ENCODE measurements at regions of chr19 and their contacts with region 1.

Region 1: DNA sequence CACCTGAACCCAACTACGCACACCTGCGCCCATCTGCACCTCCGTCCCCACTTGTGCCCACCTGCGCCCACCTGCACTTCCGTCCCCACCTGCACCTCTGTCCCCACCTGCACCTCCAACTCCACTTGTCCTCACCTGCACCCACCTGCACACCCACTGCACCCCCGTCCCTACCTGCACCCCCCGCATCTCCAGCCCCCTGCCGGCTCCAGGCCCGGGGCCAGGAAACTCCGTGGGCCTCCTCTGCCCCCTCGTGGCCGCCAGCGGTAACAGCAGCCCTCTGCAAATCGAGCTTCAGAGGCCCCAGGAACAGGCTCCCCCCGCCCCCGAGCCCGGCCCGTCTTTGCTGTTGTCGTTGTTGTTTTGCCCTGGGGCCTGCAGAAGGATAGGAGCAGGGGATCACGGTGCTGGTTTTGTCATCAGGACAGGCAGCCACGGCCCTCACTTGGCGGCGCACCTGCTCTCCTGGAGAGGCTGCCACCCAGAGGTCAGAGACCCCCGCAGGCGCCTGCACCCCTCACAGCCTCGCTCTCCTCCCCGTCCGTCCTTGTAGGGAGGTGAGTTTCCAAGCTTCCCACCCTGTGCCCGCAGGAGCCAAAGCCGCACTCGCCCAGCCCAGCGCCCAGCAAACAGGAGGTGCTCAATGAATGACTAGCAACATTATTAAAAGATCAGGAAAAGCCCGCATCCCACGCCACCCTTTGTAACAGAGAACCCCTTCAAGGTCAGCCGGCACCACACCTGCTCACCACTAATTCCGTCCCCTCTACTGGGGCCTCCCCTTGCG is 65.4 kb downstream of the GNG7 start:
- DNase-seq: peak; percentile 87
- ATAC-seq: peak; percentile 81
- H3K4me3 Mint-ChIP-seq: no peak overlapping the region
- H3K27ac Mint-ChIP-seq: no peak overlapping the region
- H3K4me1 Mint-ChIP-seq: peaks cover 12% of the 10 kb centered on the region
- H3K27me3 Mint-ChIP-seq: peaks cover 4% of the 10 kb centered on the region

Region 2: DNA sequence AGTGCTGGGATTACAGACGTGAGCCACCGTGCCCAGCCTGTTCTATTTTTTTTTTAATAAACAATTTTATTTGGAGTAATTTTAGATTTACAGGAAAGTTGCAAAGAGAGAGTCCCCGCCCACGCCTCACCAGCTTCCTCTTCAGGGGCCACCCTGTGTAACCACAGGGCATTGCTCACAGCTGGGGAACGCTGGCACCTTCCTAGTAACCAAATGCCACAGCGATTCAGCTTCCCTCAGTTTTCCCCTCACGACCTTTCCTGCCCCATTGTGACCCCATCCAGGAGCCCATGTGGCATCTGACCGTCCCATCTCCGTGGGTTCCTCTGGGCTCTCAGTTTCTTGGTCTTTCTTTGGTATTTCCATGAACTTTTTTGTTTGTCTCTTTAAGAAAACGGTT is 18.5 kb before region 1 on chr19:
- CTCF ChIA-PET with region 1: interaction called, 23 read pairs
- POLR2A ChIA-PET with region 1: interaction called, 10 read pairs
- intact Hi-C with region 1: loop called in 1 of 2 experiments (anchors 2 kb)
- DNase-seq: peak; percentile 94
- ATAC-seq: no peak
- H3K4me3 Mint-ChIP-seq: peak overlapping the region; percentile 46
- H3K27ac Mint-ChIP-seq: peak overlapping the region; percentile 77
- H3K4me1 Mint-ChIP-seq: peaks cover 64% of the 10 kb centered on the region
- H3K27me3 Mint-ChIP-seq: no peaks in the 10 kb centered on the region

Measured in activated CD4-positive, alpha-beta T cell treated with anti-CD3 and anti-CD28 coated beads for 36 hours (primary cell).